AG04450 (cell line): ENCODE measurements at regions of chr16 and their contacts with region 1.

Region 1: DNA sequence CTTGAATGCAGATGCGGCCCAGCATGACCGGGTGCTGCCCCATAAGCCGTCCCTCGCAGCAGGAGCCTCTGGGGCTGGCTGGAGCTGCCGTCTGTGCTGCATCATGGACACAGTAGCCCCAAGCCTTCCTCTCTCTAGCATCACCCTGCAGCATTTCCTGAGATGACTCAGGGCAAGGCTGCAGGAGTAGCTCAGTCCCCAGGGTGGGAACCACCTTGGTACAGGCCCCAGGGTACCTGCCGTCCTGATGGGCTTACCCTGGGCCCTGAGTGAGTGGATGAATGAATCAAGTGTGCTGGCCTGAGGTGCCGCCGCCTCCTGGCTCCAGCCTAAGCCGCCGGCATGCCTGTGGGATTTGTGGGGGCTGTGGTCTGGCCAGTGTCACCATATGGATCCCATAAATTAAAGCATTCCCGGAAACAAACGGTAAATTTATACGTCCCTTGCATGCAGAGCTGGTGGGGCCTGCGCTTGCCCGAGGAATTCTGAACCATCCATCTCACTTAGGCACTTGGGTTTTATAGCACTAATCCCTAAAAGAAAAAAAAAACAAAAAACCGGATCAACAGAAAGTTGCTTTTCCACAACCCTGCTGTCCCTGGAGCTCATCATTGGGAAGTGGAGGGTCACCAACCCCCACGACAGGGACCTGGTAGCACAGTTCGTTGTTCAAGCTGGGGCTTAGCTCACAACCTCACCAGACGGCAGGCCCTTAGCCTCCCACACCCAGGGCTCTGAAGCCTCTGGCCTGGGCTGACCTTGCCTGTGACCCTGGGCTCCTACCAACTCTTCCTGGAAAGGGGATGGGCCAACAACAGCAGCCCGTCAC is 242.6 kb upstream of the CIBAR2 start:
- DNase-seq: peak; percentile 84
- H3K4me3 ChIP-seq: no peak overlapping the region
- H3K27ac ChIP-seq: peak overlapping the region; percentile 77
- H3K27me3 ChIP-seq: peaks cover 2% of the 10 kb centered on the region
- CTCF ChIP-seq: 0 out of 2 replicates have a peak, but pooled peaks have one; percentile 2

Region 2: DNA sequence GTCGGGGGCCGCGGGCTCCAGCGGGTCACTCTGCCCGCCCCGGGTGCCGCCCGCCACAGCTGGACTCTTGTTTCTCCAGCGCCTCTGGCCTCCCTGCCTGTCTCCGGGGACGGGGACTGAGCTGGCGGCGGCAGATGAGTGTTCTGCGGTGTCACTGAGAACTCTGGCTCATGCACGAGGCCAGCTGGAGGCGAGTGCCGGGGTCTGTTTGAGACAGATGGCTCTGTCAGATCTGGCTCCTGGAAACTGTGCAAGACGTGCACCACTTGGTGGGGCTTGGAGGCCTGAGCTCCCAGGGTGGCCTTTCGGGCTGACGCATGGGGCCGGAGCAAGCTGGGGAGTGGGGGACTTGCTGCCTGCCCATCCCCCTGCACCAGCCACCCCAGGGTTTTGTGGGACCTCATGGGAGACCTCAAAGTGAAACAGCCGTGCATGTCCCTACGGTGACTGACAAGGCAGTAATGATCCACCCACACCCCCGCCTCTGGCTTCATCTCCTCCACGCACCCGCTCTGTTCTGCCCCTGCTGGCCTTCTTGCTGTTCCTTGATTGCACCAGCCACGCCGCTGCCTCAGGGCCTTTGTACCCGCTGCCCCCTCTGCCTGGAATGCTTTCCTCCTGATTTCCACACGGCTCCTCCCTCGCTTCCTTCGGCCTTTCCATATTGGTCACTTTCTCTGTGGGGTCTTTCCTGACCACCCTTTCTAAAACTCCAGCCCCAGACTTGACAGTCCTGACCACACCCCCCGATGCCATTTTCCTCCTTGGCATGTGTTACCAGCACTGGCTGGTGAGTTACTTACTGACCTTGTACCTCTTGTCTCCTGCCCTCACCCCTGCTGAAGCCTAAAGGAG is 67.7 kb before region 1 on chr16:
- CTCF ChIA-PET with region 1: interaction called, 3 read pairs
- POLR2A ChIA-PET with region 1: interaction called, 10 read pairs
- DNase-seq: no peak
- H3K4me3 ChIP-seq: peak overlapping the region; percentile 13; the same call in 1 of the 2 replicates
- H3K27ac ChIP-seq: peak overlapping the region; percentile 65
- H3K27me3 ChIP-seq: no peaks in the 10 kb centered on the region
- CTCF ChIP-seq: peak; percentile 31

Region 3: GRCh38 chr16:85303357-85303901 is 51.5 kb before region 1 on chr16:
- CTCF ChIA-PET with region 1: no interaction called
- POLR2A ChIA-PET with region 1: no interaction called
- DNase-seq: no peak
- H3K4me3 ChIP-seq: no peak overlapping the region
- H3K27ac ChIP-seq: no peak overlapping the region
- H3K27me3 ChIP-seq: no peaks in the 10 kb centered on the region
- CTCF ChIP-seq: peak; percentile 54

Region 4: DNA sequence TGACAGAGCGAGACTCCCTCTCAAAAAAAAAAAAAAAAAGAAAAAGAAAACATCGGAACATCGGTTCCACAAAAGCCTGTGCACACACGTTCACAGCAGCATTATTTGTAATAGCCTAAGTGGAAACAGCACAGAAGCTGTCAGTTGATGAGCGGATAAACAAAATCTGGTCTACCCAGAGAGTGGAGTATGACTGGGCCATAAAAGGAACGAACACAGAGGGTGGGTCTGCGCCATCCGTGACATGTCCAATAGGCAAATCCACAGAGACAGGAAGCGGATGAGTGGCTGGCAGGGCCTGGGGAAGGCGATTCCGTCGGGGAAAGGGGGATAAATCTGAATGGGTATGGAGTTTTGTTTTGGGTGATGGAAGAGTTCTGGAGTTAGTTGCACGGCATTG is 30.4 kb before region 1 on chr16:
- CTCF ChIA-PET with region 1: no interaction called
- POLR2A ChIA-PET with region 1: no interaction called
- DNase-seq: no peak
- H3K4me3 ChIP-seq: no peak overlapping the region
- H3K27ac ChIP-seq: no peak overlapping the region
- H3K27me3 ChIP-seq: no peaks in the 10 kb centered on the region
- CTCF ChIP-seq: no peak

Region 5: GRCh38 chr16:85381738-85382592 is 27.1 kb after region 1 on chr16:
- CTCF ChIA-PET with region 1: no interaction called
- POLR2A ChIA-PET with region 1: no interaction called
- DNase-seq: no peak
- H3K4me3 ChIP-seq: no peak overlapping the region
- H3K27ac ChIP-seq: peak overlapping the region; percentile 42
- H3K27me3 ChIP-seq: no peaks in the 10 kb centered on the region
- CTCF ChIP-seq: no peak

Region 6: GRCh38 chr16:85428168-85428898 is 73.4 kb after region 1 on chr16:
- CTCF ChIA-PET with region 1: no interaction called
- POLR2A ChIA-PET with region 1: no interaction called
- DNase-seq: no peak
- H3K4me3 ChIP-seq: no peak overlapping the region
- H3K27ac ChIP-seq: no peak overlapping the region
- H3K27me3 ChIP-seq: no peaks in the 10 kb centered on the region
- CTCF ChIP-seq: peak; percentile 48